HAP-1 (cell line): ENCODE measurements at regions of chr16 and their contacts with region 1.

Region 1: GRCh38 chr16:22291860-22292692 is 5.1 kb upstream of the POLR3E start:
- DNase-seq: no peak
- H3K4me3 ChIP-seq: no peak overlapping the region
- H3K4me1 ChIP-seq: peaks cover 15% of the 10 kb centered on the region
- H3K27me3 ChIP-seq: no peaks in the 10 kb centered on the region

Region 2: GRCh38 chr16:22206013-22206841 is 85.8 kb before region 1 on chr16 and contains the start of gene EEF2K:
- in situ Hi-C with region 1: loop called (anchors 5 kb)
- DNase-seq: peak; percentile 94
- H3K4me3 ChIP-seq: peak within 1 kb of the TSS; percentile 95
- H3K4me1 ChIP-seq: peaks cover 2% of the 10 kb centered on the region
- H3K27me3 ChIP-seq: no peaks in the 10 kb centered on the region

Region 3: GRCh38 chr16:22346483-22346882 is 54.4 kb after region 1 on chr16:
- in situ Hi-C with region 1: no loop called
- DNase-seq: no peak
- H3K4me3 ChIP-seq: no peak overlapping the region
- H3K4me1 ChIP-seq: no peaks in the 10 kb centered on the region
- H3K27me3 ChIP-seq: no peaks in the 10 kb centered on the region

Region 4: DNA sequence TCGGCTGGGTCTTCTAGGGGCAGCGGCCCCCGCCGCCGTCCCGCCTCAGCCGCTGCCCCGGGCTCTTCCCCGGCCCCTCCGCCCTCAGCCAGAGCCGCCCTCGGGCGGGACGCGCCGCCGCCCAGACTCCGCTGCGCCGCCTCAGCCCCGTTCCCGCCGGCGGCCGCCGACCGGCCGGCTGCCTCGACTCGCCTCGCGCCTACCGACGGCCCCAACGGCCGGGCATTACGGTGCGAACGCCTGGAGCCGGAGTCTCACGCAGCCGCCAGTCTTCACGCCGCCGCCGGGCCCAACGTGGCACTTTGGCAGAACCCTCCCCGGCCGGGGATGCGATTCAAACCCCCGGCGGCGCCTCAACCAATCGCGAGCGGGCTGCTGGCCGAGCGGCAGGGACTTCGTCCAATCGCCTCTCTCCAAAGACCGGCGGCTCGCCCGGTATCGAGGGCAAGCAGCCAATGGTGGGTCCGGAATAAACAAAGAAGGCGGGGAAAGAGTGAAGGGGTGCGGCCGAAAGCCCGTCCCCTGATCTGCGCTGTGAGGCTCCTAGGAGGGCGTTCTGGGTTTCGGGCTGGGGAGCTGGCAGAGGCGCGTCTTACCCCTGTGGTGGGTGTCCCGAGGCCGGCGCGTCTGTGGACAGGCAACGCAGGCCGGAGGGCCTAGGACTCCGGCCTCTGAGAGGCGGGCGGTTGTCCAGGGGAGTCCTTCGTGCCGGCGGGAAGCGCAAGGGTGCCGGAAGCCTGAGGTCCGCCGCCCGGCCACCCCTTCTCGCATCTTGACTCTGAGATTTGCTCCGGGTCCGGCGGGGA is 82.4 kb after region 1 on chr16 and contains the start of gene CDR2:
- in situ Hi-C with region 1: no loop called
- DNase-seq: peak; percentile 97 to 98
- H3K4me3 ChIP-seq: peak within 1 kb of the TSS; percentile 72
- H3K4me1 ChIP-seq: peaks cover 15% of the 10 kb centered on the region
- H3K27me3 ChIP-seq: no peaks in the 10 kb centered on the region